ENCODE measurements at regions of chr15 and their contacts with region 1.

Region 1: DNA sequence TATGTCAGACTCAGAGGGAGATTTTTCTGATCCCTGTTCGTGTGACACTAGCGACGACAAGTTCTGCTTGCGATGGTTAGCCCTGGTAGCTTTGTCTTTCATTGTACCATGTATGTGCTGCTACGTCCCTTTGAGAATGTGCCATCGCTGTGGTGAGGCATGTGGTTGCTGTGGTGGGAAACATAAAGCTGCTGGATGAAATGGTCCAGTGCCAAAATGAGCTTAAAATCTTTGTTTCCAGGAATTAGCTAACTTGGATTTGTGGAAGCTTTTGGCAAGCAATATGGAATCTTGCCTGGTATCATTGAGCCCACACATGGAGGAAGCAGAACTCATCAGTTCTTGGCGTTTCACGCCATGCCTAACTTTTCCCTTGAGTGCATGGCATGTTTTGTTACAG is 98.8 kb downstream of the SPRED1 start:
- DNase-seq: no peak
- ATAC-seq: no peak
- H3K4me3 ChIP-seq: no peak overlapping the region
- H3K4me3 Mint-ChIP-seq: no peak overlapping the region
- H3K27ac ChIP-seq: no peak overlapping the region
- H3K27ac Mint-ChIP-seq: no peak overlapping the region
- H3K4me1 ChIP-seq: no peaks in the 10 kb centered on the region
- H3K4me1 Mint-ChIP-seq: no peaks in the 10 kb centered on the region
- H3K27me3 ChIP-seq: no peaks in the 10 kb centered on the region
- H3K27me3 Mint-ChIP-seq: peaks cover 2 to 7% of the 10 kb centered on the region in 2 donors

Region 2: GRCh38 chr15:38323895-38324294 is 27.6 kb before region 1 on chr15:
- CTCF ChIA-PET with region 1: interaction called in 1 of 2 experiments, 3 read pairs
- POLR2A ChIA-PET with region 1: interaction called in 1 of 2 experiments, 14 read pairs
- DNase-seq: no peak
- ATAC-seq: no peak
- H3K4me3 ChIP-seq: no peak overlapping the region
- H3K4me3 Mint-ChIP-seq: no peak overlapping the region
- H3K27ac ChIP-seq: no peak overlapping the region
- H3K27ac Mint-ChIP-seq: no peak overlapping the region
- H3K4me1 ChIP-seq: no peaks in the 10 kb centered on the region
- H3K4me1 Mint-ChIP-seq: peaks cover 0 to 3% (median 0%) of the 10 kb centered on the region in 3 donors
- H3K27me3 ChIP-seq: no peaks in the 10 kb centered on the region
- H3K27me3 Mint-ChIP-seq: peaks cover 0 to 1% of the 10 kb centered on the region in 2 donors

Region 3: GRCh38 chr15:38490242-38490922 is 138.9 kb after region 1 on chr15:
- CTCF ChIA-PET with region 1: no interaction called
- POLR2A ChIA-PET with region 1: no interaction called
- DNase-seq: no peak
- ATAC-seq: no peak
- H3K4me3 ChIP-seq: no peak overlapping the region
- H3K4me3 Mint-ChIP-seq: no peak overlapping the region
- H3K27ac ChIP-seq: peak overlapping the region; percentile 5
- H3K27ac Mint-ChIP-seq: peak overlapping the region; percentile 48 to 61
- H3K4me1 ChIP-seq: peaks cover 0 to 5% of the 10 kb centered on the region in 2 experiments
- H3K4me1 Mint-ChIP-seq: peaks cover 21 to 53% (median 47%) of the 10 kb centered on the region in 3 donors
- H3K27me3 ChIP-seq: no peaks in the 10 kb centered on the region
- H3K27me3 Mint-ChIP-seq: no peaks in the 10 kb centered on the region

Measured in T-cell (primary cell).